Breast epithelium (tissue), 4 donors: ENCODE measurements at regions of chrX and their contacts with region 1.

Region 1: GRCh38 chrX:122344816-122345215 is 839.3 kb upstream of the GRIA3 start:
- DNase-seq: no peak
- H3K4me3 ChIP-seq: no peak overlapping the region
- H3K27ac ChIP-seq: no peak overlapping the region
- H3K4me1 ChIP-seq: no peaks in the 10 kb centered on the region
- H3K27me3 ChIP-seq: no peaks in the 10 kb centered on the region
- CTCF ChIP-seq: no peak
- POLR2A ChIP-seq: no peak

Region 2: DNA sequence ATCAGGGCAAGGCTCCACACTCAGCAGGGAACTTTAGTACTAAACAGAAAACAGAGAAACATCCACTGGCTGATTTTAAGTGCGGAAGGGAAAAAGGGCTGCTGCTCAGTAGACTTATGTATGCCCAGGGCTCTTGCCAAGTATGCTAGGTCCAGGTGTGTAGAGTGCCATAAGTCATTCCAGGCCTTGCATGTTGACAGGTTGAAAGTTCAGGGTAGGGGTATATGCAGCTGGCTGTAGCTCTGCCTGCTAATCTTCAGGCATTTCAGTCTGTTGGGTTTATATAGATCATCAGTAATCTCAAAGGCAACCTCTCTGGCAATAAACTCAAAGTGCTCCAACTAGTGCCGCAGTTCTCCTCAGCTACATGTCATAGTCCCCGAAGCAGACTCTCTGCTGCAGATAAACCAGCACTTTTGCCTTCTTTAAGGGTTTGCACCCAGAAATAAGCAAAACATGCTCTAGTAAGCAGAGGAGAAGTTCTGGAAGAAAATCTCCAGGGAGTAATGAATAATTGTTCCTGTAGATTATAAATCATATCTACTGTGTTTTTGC is 704.3 kb after region 1 on chrX:
- intact Hi-C with region 1: loop called (anchors 5 kb)
- DNase-seq: no peak
- H3K4me3 ChIP-seq: no peak overlapping the region
- H3K27ac ChIP-seq: no peak overlapping the region
- H3K4me1 ChIP-seq: no peaks in the 10 kb centered on the region
- H3K27me3 ChIP-seq: no peaks in the 10 kb centered on the region
- CTCF ChIP-seq: no peak
- POLR2A ChIP-seq: no peak